IMR-90 (cell line): ENCODE measurements at regions of chr12 and their contacts with region 1.

Region 1: GRCh38 chr12:108833355-108833733 is 24.0 kb downstream of the SSH1 start:
- DNase-seq: peak; percentile 90
- ATAC-seq: peak; percentile 67
- H3K4me3 ChIP-seq: no peak overlapping the region
- H3K27ac ChIP-seq: peak overlapping the region; percentile 98
- H3K4me1 ChIP-seq: peaks cover 44% of the 10 kb centered on the region
- H3K27me3 ChIP-seq: no peaks in the 10 kb centered on the region
- CTCF ChIP-seq: no peak
- POLR2A ChIP-seq: peak; percentile 60
- RAD21 ChIP-seq: no peak

Region 2: GRCh38 chr12:108850854-108851573 is 17.7 kb after region 1 on chr12:
- CTCF ChIA-PET with region 1: interaction called, 13 read pairs
- POLR2A ChIA-PET with region 1: interaction called, 5 read pairs
- dilution Hi-C with region 1: no loop called
- in situ Hi-C with region 1: no loop called
- intact Hi-C with region 1: loop called (anchors 1 kb)
- DNase-seq: peak; percentile 91
- ATAC-seq: peak; percentile 71
- H3K4me3 ChIP-seq: no peak overlapping the region
- H3K27ac ChIP-seq: peak overlapping the region; percentile 50
- H3K4me1 ChIP-seq: peaks cover 31% of the 10 kb centered on the region
- H3K27me3 ChIP-seq: no peaks in the 10 kb centered on the region
- CTCF ChIP-seq: peak; percentile 40
- POLR2A ChIP-seq: peak; percentile 52
- RAD21 ChIP-seq: peak; percentile 45

Region 3: DNA sequence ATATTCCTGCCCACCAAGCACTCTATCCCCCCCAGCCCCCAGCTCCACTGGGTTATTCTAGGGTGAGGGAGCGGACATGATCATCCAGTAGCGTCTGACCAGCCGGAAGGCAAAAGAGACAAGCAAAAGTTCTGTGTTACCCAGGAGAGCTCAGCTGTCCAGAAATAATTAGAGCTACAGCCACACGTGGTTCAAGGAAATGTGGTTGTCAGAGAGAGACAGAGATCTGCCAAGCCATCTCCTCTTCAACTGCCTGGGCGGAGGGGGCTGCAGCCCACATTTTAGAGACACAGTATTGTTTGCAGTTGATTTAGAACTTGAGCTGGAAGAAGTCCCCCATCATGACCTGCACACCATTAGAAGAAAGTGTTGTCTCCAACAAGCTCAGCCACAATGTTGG is 77.0 kb after region 1 on chr12:
- CTCF ChIA-PET with region 1: no interaction called
- POLR2A ChIA-PET with region 1: interaction called, 11 read pairs
- dilution Hi-C with region 1: no loop called
- in situ Hi-C with region 1: no loop called
- intact Hi-C with region 1: no loop called
- DNase-seq: no peak
- ATAC-seq: no peak
- H3K4me3 ChIP-seq: no peak overlapping the region
- H3K27ac ChIP-seq: no peak overlapping the region
- H3K4me1 ChIP-seq: no peaks in the 10 kb centered on the region
- H3K27me3 ChIP-seq: peaks cover 4% of the 10 kb centered on the region
- CTCF ChIP-seq: no peak
- POLR2A ChIP-seq: no peak
- RAD21 ChIP-seq: no peak